GM12878 (cell line): ENCODE measurements at regions of chr14 and their contacts with region 1.

Region 1: GRCh38 chr14:51547260-51547659 is 104.5 kb upstream of the FRMD6 start:
- DNase-seq: no peak
- ATAC-seq: no peak
- H3K4me3 ChIP-seq: no peak overlapping the region
- H3K27ac ChIP-seq: no peak overlapping the region
- H3K4me1 ChIP-seq: no peaks in the 10 kb centered on the region
- H3K27me3 ChIP-seq: no peaks in the 10 kb centered on the region
- CTCF ChIP-seq: no peak
- EP300 ChIP-seq: no peak
- POLR2A ChIP-seq: no peak
- RAD21 ChIP-seq: no peak

Region 2: GRCh38 chr14:51395361-51395849 is 151.9 kb before region 1 on chr14:
- CTCF ChIA-PET with region 1: no interaction called
- POLR2A ChIA-PET with region 1: no interaction called
- RAD21 ChIA-PET with region 1: no interaction called
- SMC1A ChIA-PET with region 1: no interaction called
- in situ Hi-C with region 1: no loop called
- intact Hi-C with region 1: no loop called
- DNase-seq: no peak
- ATAC-seq: no peak
- H3K4me3 ChIP-seq: no peak overlapping the region
- H3K27ac ChIP-seq: no peak overlapping the region
- H3K4me1 ChIP-seq: no peaks in the 10 kb centered on the region
- H3K27me3 ChIP-seq: no peaks in the 10 kb centered on the region; a peak in 1 of 4 replicates
- CTCF ChIP-seq: no peak
- EP300 ChIP-seq: no peak
- POLR2A ChIP-seq: no peak
- RAD21 ChIP-seq: no peak

Region 3: DNA sequence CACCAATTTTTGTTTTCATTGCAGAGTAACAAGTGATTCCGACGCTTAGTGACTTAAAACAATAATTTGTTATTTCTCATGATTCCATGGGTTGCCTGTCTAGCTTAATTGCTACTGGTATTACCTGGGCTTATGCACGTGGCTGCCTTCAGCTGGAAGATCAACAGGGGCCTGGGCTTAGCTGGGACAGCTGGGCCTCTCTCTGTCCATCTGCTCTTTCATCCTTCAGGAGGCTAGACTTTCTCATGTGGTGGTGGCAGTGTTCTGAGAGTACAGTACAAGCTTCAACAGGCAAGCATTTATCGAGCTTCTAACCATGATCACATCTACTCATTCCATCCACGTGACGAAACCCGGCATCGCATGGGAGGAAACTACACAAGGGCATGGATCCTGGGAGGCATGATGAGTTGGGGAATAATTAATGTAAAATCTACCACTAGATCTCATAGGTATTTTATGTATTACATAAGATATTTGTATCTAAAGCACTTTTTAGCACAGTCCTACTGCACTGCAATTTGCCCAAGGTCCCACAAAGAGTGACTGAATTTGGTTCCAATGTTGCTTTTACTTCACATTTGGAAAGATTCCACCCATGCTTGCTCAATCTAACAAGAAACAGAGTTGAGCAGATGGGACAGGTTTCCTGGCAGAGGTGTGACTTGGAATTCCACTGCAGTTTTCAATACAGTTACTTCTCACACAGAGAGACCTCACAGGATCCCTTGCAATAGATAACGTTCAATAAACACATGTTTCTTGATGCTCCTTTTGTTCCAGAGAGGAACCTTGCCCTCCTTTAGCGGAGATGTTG is 48.6 kb before region 1 on chr14:
- CTCF ChIA-PET with region 1: no interaction called
- POLR2A ChIA-PET with region 1: no interaction called
- RAD21 ChIA-PET with region 1: interaction called, 3 read pairs
- SMC1A ChIA-PET with region 1: no interaction called
- in situ Hi-C with region 1: no loop called
- intact Hi-C with region 1: loop called (anchors 5 kb)
- DNase-seq: no peak
- ATAC-seq: no peak
- H3K4me3 ChIP-seq: no peak overlapping the region
- H3K27ac ChIP-seq: no peak overlapping the region
- H3K4me1 ChIP-seq: no peaks in the 10 kb centered on the region
- H3K27me3 ChIP-seq: no peaks in the 10 kb centered on the region
- CTCF ChIP-seq: no peak
- EP300 ChIP-seq: no peak
- POLR2A ChIP-seq: no peak
- RAD21 ChIP-seq: no peak